RWPE1 (cell line): ENCODE measurements at regions of chr1 and their contacts with region 1.

Region 1: DNA sequence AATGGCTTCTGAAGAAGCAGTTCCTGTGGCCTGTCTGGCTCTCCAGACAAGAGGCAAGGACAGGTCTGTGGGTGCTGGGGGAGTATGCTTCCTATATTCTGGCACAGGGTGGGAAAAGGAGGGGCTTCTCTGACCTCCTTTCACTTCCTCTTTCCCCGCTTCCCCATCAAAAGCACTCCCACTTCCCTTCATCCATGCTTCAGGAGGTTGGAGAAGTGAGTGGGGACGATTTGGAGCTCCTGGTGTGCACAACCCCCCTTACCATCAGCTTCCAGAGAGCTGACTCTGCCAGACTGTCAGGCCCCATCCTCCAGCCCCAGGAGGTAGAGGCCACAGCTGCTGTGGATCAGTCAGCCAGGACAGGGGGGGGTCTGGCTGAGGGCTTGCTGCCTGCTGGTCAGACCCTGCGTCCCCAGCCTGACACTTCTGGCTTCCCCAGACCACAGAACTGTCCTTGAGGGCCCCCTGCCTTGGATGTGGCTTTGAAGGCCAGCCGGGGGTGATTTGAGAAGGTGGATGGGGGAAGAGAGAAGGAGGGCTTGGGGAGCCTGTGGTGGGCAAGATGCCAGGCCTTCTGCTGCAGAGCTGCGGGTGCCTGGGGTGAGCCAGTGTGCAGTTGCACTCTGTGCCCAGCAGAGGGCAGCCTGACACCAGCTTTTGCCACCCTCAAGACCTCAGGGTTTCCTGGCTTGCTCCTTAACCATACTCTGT is 21.5 kb upstream of the TMEM222 start:
- DNase-seq: peak; percentile 87
- H3K27ac ChIP-seq: peak overlapping the region; percentile 99
- CTCF ChIP-seq: peak; percentile 95

Region 2: GRCh38 chr1:27258598-27258997 is 41.9 kb before region 1 on chr1:
- CTCF ChIA-PET with region 1: no interaction called
- POLR2A ChIA-PET with region 1: no interaction called
- DNase-seq: no peak
- H3K27ac ChIP-seq: no peak overlapping the region
- CTCF ChIP-seq: no peak

Region 3: DNA sequence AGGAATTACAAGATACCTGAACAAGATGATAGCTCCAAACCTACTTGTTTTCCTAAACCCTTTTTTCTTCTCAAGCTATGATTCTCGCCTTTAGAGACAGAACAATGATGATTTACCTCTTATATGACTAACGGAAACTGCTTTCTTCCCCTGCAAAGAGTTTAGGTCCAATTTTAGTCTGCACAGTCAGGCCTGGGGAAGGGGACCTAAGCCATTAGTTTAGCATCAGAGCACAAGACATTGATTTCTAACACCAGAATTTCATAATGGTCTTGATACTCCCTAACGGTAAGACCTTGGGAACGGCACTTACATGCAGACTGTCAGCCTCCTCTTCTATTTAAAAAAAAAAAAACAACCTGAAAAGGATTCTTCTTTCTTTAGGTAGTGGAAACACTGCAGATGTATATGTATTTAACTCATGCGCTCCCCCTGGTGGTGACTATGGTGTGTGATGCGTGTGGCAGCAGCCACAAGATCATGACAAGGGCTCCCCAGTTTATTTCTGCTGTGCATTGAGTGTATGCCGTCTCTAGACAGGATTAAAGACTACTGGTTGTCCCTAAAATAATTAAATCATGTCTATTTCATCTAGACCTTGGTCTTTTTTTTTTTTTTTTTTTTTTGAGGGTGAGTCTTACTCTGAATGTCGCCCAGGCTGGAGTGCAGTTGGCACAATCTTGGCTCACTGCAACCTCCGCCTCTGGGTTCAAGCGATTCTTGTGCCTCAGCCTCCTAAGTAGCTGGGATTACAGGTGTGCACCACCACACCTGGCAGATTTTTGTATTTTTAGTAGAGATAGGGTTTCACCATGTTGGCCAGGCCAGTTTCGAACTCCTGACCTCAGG is 15.8 kb before region 1 on chr1:
- CTCF ChIA-PET with region 1: interaction called, 16 read pairs
- POLR2A ChIA-PET with region 1: no interaction called
- DNase-seq: peak; percentile 82
- H3K27ac ChIP-seq: no peak overlapping the region
- CTCF ChIP-seq: peak; percentile 88

Region 4: GRCh38 chr1:27357281-27358037 is 57.0 kb after region 1 on chr1:
- CTCF ChIA-PET with region 1: interaction called, 21 read pairs
- POLR2A ChIA-PET with region 1: no interaction called
- DNase-seq: peak; percentile 77
- H3K27ac ChIP-seq: peak overlapping the region; percentile 98
- CTCF ChIP-seq: peak; percentile 92

Region 5: DNA sequence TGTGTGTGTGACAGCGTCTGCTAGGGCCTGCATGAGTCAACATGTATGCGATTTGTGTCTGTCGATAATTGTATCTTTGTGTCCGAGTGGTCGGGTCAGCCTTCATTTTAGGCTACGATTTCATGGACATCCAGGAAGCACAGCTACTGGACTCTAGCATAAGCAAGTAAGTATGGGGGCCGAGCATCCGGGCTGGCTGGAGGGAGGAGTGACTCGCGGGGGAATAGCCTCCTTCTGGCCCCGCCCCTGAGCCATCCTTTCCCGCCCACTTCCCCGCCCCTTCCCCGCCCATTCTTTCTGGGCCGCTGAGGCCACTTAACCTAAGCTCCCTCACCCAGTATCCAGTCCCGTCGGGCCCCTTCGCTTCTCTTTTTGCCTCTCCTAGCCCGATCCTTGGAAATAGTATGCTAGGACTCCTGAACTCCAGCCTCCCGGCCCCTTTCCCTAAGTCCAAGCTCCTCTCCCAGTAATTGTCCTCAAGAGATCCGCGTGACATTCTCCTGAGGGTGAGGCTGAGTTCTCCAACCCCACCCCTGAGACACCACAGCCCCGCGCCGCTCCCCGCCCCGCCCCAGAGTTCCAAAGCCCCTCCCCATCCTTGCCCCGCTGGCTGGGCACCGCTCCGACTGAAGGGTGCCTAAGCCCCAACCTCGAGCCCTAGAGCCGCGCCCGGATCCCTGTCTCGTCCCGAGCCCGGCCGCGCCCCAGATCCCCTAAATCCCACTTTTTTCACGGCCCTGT is 65.0 kb after region 1 on chr1:
- CTCF ChIA-PET with region 1: interaction called, 18 read pairs
- POLR2A ChIA-PET with region 1: interaction called, 5 read pairs
- DNase-seq: peak; percentile 90
- H3K27ac ChIP-seq: peak overlapping the region; percentile 100
- CTCF ChIP-seq: no peak

Region 6: DNA sequence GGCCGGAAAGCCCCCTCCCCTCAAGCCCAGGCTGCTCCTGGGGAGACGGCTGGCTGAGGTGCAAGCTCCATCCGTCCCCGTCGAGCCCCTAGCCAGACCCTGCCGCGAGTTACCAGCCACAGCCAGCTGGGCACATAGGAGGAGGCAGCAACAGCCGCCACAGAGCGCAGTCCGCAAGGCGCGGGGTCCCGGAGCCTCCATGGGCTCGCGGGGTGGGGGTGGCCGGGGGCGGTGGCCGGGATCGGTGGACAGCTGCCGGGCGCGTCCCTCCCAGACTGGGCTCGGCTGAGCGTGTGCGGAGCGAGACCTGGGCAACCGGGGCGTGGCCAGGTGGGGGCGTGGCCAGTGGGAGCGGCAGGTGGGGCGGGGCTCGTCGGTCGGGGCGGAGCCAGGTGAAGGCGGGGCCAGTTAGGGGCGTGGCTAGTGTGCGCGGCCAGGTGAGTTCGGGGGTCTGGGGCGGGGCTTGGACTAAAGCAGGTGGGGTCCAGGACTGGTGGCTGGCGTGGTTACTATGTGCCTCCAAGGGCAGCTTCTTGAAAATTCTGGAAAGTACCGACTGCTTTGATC is 82.6 kb after region 1 on chr1 and contains the start of gene CD164L2:
- CTCF ChIA-PET with region 1: interaction called, 45 read pairs
- POLR2A ChIA-PET with region 1: interaction called, 4 read pairs
- DNase-seq: peak; percentile 90
- H3K27ac ChIP-seq: peak within 1 kb of the TSS; percentile 27
- CTCF ChIP-seq: no peak

Region 7: GRCh38 chr1:27388337-27389005 is 88.0 kb after region 1 on chr1:
- CTCF ChIA-PET with region 1: interaction called, 45 read pairs
- POLR2A ChIA-PET with region 1: interaction called, 4 read pairs
- DNase-seq: peak; percentile 74
- H3K27ac ChIP-seq: no peak overlapping the region
- CTCF ChIP-seq: peak; percentile 91

Region 8: GRCh38 chr1:27395441-27396195 is 95.1 kb after region 1 on chr1:
- CTCF ChIA-PET with region 1: interaction called, 45 read pairs
- POLR2A ChIA-PET with region 1: no interaction called
- DNase-seq: peak; percentile 77
- H3K27ac ChIP-seq: peak overlapping the region; percentile 60
- CTCF ChIP-seq: peak; percentile 98